CD14-positive monocyte (primary cell): ENCODE measurements at regions of chr6 and their contacts with region 1.

Region 1: GRCh38 chr6:14066782-14067406 is 50.7 kb upstream of the CD83 start:
- DNase-seq: peak; percentile 25 to 54 (median 51)
- H3K4me3 ChIP-seq: no peak overlapping the region
- H3K4me3 Mint-ChIP-seq: peak overlapping the region in 1 of 2 donors; percentile 53
- H3K27ac ChIP-seq: no peak overlapping the region
- H3K27ac Mint-ChIP-seq: peak overlapping the region in 2 of 7 donors; percentile 10 to 19
- H3K4me1 ChIP-seq: no peaks in the 10 kb centered on the region
- H3K4me1 Mint-ChIP-seq: peaks cover 9% of the 10 kb centered on the region
- H3K27me3 ChIP-seq: peaks cover 2 to 6% of the 10 kb centered on the region in 2 donors
- H3K27me3 Mint-ChIP-seq: peaks cover 0 to 9% (median 7%) of the 10 kb centered on the region in 3 donors
- CTCF ChIP-seq: peak; percentile 73

Region 2: DNA sequence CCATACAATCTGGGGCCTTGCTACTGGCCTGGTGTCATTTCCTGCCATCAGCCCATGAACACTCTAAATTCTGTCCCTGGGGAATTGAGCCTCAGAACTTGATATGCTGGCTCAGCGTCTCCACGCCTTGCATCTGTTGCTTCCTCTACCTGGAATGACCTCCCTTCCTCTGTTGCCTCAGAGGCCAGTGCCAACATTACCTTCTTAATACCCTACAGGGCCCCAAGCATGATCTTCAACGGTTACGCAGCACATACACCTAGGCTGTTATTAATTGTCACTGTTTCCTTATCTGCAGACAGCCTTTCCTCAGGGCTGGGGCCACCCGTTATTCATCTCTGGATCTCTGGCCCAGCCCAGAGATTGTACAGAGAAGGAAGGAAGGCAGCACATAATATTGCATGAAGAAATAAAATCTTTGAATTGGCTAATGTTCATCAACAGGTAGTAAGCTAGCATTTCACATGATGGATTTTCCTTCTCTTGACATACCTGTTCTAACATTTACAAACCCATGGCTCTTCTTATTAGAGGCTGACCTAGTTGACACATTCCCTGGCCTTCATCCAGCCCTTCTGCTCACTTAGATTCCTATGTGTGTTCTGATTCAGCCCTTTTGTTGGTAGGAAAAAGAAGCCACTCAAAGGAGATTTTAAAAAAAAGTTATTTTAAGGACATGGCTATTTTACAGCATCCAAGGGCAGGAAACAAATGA is 150.5 kb before region 1 on chr6:
- intact Hi-C with region 1: loop called (anchors 10 kb)
- DNase-seq: no peak
- H3K4me3 ChIP-seq: no peak overlapping the region
- H3K4me3 Mint-ChIP-seq: no peak overlapping the region
- H3K27ac ChIP-seq: no peak overlapping the region
- H3K27ac Mint-ChIP-seq: peak overlapping the region in 1 of 7 donors; percentile 8
- H3K4me1 ChIP-seq: no peaks in the 10 kb centered on the region
- H3K4me1 Mint-ChIP-seq: no peaks in the 10 kb centered on the region
- H3K27me3 ChIP-seq: peaks cover 12 to 18% of the 10 kb centered on the region in 2 donors
- H3K27me3 Mint-ChIP-seq: peaks cover 14 to 24% (median 18%) of the 10 kb centered on the region in 3 donors
- CTCF ChIP-seq: no peak

Region 3: DNA sequence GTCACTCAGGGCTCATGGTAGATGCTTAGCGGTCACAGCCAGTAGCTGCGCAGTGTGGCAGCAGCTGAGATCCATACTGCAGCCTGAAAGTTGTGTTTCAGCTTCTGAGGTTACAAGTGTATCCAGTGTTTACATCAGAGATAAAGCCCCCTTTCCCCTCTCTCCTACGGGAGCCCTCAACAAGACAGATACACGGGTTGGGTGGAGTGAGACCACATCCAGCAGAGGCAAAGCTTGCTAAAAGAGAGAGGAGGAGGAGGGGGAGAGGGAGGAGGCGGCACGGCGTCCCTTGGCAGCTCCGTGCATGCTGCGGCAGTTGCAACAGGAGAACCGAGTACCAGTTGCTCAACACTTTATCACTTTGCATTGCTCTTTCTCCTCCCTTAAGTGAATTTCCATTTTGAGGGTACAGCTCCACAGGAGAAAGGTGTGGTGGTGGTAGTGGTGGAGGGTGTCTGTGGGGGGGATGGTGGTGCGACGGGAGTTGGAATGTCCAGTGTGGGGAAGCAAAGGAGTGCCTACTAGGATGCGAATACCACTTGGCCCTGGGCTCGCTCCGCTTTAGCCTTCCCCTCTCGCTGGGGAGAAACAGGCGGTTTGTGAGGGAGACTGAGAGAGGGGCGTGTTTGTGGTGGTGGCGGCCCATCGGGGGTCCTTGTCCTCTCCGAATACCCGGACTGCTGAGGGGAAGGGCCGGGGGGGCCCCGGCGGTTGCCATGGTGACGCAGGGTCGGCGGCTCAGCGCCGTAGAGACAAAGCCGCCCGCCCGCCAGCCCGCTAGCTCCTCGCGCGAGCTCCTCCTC is 142.5 kb before region 1 on chr6:
- intact Hi-C with region 1: loop called (anchors 10 kb)
- DNase-seq: peak in 2 of 3 donors; percentile 7 to 12
- H3K4me3 ChIP-seq: peak overlapping the region; percentile 2 to 68 (median 18)
- H3K4me3 Mint-ChIP-seq: peak overlapping the region; percentile 75 to 92
- H3K27ac ChIP-seq: no peak overlapping the region
- H3K27ac Mint-ChIP-seq: peak overlapping the region in 2 of 7 donors; percentile 9 to 21
- H3K4me1 ChIP-seq: peaks cover 15 to 17% of the 10 kb centered on the region in 2 donors
- H3K4me1 Mint-ChIP-seq: peaks cover 16% of the 10 kb centered on the region
- H3K27me3 ChIP-seq: peaks cover 76 to 90% of the 10 kb centered on the region in 2 donors
- H3K27me3 Mint-ChIP-seq: peaks cover 59 to 77% (median 61%) of the 10 kb centered on the region in 3 donors
- CTCF ChIP-seq: no peak

Region 4: GRCh38 chr6:14734416-14735340 is 667.8 kb after region 1 on chr6:
- intact Hi-C with region 1: no loop called
- DNase-seq: peak; percentile 95 to 99 (median 99)
- H3K4me3 ChIP-seq: no peak overlapping the region
- H3K4me3 Mint-ChIP-seq: peak overlapping the region; percentile 30 to 62
- H3K27ac ChIP-seq: peak overlapping the region; percentile 60 to 99
- H3K27ac Mint-ChIP-seq: peak overlapping the region; percentile 95 to 100 (median 99)
- H3K4me1 ChIP-seq: peaks cover 60 to 63% of the 10 kb centered on the region in 2 donors
- H3K4me1 Mint-ChIP-seq: peaks cover 89% of the 10 kb centered on the region
- H3K27me3 ChIP-seq: no peaks in the 10 kb centered on the region
- H3K27me3 Mint-ChIP-seq: no peaks in the 10 kb centered on the region
- CTCF ChIP-seq: no peak